Testis (tissue), 5 donors: ENCODE measurements at regions of chr12 and their contacts with region 1.

Region 1: DNA sequence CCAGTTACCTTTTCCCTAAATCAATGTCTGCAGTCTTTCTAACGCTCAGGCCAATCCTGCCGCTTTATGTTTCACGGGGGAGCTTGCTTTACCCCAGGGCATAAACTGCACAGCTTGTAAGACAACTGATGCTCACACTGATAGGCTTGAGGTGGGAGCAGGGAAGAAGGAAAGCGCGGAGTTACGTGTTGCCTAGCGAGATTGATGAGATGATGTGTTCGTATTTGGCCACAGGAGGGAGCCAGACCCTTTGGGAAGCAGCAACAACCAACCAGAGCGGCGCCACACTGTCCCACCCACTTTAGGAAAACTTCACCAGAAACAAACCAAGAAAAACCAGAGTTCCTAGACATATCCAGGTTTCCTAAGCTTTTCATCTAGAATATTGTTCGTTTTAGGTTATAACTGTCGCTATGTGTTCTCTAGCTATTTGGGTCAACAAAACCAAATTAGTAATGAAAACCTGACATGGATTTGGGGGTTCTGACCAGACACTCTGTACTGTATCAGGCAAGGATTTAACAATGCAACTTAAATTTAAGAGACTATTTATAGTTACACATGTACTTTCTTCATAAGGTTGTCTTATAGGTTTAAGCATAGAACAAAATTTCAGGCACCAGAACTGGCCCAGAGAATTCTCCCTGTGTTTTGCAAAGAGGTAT is 2.4 kb downstream of the IL26 start:
- DNase-seq: peak; percentile 93
- H3K4me3 ChIP-seq: no peak overlapping the region
- H3K27ac ChIP-seq: no peak overlapping the region
- H3K4me1 ChIP-seq: no peaks in the 10 kb centered on the region
- H3K27me3 ChIP-seq: no peaks in the 10 kb centered on the region
- CTCF ChIP-seq: peak; percentile 39 to 67 (median 66)
- POLR2A ChIP-seq: no peak

Region 2: DNA sequence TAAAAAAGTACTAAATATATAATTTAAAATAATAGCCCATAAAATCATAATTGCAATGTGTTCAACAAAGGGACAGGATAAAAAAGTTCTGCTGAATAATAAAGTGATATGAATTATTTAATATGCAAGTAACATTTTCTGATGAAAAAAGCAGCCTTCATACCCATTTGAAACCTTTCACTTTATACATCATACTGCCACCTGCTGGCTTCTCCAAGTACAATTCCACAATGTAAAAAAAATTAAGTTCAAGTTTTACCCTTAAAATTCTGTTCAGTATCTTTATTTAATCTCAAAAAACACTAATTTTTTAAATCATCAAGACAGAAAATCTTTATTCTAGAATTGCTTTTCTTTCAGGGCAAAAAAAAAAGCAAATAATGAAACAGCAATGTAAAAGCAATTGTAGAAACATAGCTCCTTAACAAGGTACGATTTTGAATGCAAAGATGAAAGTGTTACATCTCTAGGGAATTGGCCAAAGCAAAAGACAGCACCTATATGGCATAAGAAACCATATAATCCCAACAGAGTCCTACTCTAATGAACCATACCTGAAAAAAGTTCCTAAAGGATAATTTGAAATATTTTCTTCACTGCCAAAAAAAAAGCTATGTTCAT is 93.9 kb after region 1 on chr12:
- intact Hi-C with region 1: loop called (anchors 5 kb)
- DNase-seq: peak; percentile 51
- H3K4me3 ChIP-seq: no peak overlapping the region
- H3K27ac ChIP-seq: no peak overlapping the region
- H3K4me1 ChIP-seq: no peaks in the 10 kb centered on the region
- H3K27me3 ChIP-seq: no peaks in the 10 kb centered on the region
- CTCF ChIP-seq: peak; percentile 43 to 77 (median 44)
- POLR2A ChIP-seq: no peak